ENCODE measurements at regions of chr4 and their contacts with region 1.

Region 1: GRCh38 chr4:113837397-113837796 is 75.9 kb upstream of the CAMK2D start:
- DNase-seq: peak; percentile 94
- ATAC-seq: peak; percentile 99
- H3K4me3 ChIP-seq: no peak overlapping the region
- H3K27ac ChIP-seq: peak overlapping the region; percentile 92
- H3K4me1 ChIP-seq: peaks cover 18% of the 10 kb centered on the region
- H3K27me3 ChIP-seq: no peaks in the 10 kb centered on the region
- CTCF ChIP-seq: no peak
- EP300 ChIP-seq: peak; percentile 59 to 98; a peak in 3 of 4 replicates
- POLR2A ChIP-seq: no peak
- RAD21 ChIP-seq: no peak

Region 2: GRCh38 chr4:113513382-113513781 is 324.0 kb before region 1 on chr4:
- CTCF ChIA-PET with region 1: no interaction called
- POLR2A ChIA-PET with region 1: no interaction called
- RAD21 ChIA-PET with region 1: no interaction called
- SMC1A ChIA-PET with region 1: no interaction called
- in situ Hi-C with region 1: no loop called
- intact Hi-C with region 1: no loop called
- DNase-seq: no peak
- ATAC-seq: no peak
- H3K4me3 ChIP-seq: no peak overlapping the region
- H3K27ac ChIP-seq: no peak overlapping the region
- H3K4me1 ChIP-seq: no peaks in the 10 kb centered on the region
- H3K27me3 ChIP-seq: no peaks in the 10 kb centered on the region
- CTCF ChIP-seq: no peak
- EP300 ChIP-seq: no peak
- POLR2A ChIP-seq: no peak
- RAD21 ChIP-seq: no peak

Region 3: DNA sequence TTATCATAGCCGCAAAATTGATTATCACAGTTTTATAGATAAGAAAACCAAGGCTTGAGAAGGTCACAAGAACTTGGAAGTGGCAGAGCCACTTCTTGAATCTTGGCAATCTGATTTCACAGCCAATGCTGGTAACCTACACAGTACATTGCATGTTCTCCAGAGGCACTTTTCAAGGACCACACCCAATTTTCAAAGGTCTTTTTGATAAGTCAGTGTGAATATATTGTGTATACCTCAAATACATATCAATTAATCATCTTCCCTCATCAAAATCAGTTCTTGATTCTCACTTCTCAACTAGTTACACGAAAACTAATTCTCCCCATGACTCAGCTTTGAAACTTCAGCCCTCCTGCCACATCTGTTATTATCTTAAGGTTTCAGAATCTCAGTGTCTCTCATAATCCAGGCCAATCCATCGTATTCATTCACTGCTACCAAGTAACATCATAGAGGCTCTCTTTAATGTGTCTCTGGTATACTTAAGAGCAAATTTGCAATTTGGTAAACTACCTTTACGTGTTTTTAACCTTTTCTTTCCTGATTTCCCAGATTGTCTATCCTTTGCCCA is 92.6 kb before region 1 on chr4:
- CTCF ChIA-PET with region 1: no interaction called
- POLR2A ChIA-PET with region 1: no interaction called
- RAD21 ChIA-PET with region 1: no interaction called
- SMC1A ChIA-PET with region 1: no interaction called
- in situ Hi-C with region 1: no loop called
- intact Hi-C with region 1: no loop called
- DNase-seq: no peak
- ATAC-seq: peak; percentile 28; the same call in 2 of the 3 replicates
- H3K4me3 ChIP-seq: no peak overlapping the region
- H3K27ac ChIP-seq: no peak overlapping the region
- H3K4me1 ChIP-seq: no peaks in the 10 kb centered on the region
- H3K27me3 ChIP-seq: no peaks in the 10 kb centered on the region
- CTCF ChIP-seq: no peak
- EP300 ChIP-seq: no peak
- POLR2A ChIP-seq: no peak
- RAD21 ChIP-seq: no peak

Region 4: GRCh38 chr4:113766882-113767281 is 70.5 kb before region 1 on chr4:
- CTCF ChIA-PET with region 1: interaction called, 5 read pairs
- POLR2A ChIA-PET with region 1: interaction called, 3 read pairs
- RAD21 ChIA-PET with region 1: interaction called, 5 read pairs
- SMC1A ChIA-PET with region 1: interaction called, 14 read pairs
- in situ Hi-C with region 1: no loop called
- intact Hi-C with region 1: loop called (anchors 1 kb)
- DNase-seq: no peak
- ATAC-seq: no peak
- H3K4me3 ChIP-seq: no peak overlapping the region
- H3K27ac ChIP-seq: no peak overlapping the region
- H3K4me1 ChIP-seq: no peaks in the 10 kb centered on the region
- H3K27me3 ChIP-seq: no peaks in the 10 kb centered on the region
- CTCF ChIP-seq: no peak
- EP300 ChIP-seq: no peak
- POLR2A ChIP-seq: no peak
- RAD21 ChIP-seq: no peak

Region 5: GRCh38 chr4:113823291-113823659 is 14.1 kb before region 1 on chr4:
- CTCF ChIA-PET with region 1: interaction called, 54 read pairs
- POLR2A ChIA-PET with region 1: interaction called, 36 read pairs
- RAD21 ChIA-PET with region 1: interaction called, 84 read pairs
- SMC1A ChIA-PET with region 1: interaction called, 150 read pairs
- in situ Hi-C with region 1: no loop called
- intact Hi-C with region 1: loop called (anchors 1 kb)
- DNase-seq: peak; percentile 85
- ATAC-seq: peak; percentile 84
- H3K4me3 ChIP-seq: peak overlapping the region; percentile 13; the same call in 1 of the 2 replicates
- H3K27ac ChIP-seq: peak overlapping the region; percentile 95
- H3K4me1 ChIP-seq: peaks cover 43% of the 10 kb centered on the region
- H3K27me3 ChIP-seq: no peaks in the 10 kb centered on the region
- CTCF ChIP-seq: no peak
- EP300 ChIP-seq: peak; percentile 54 to 88
- POLR2A ChIP-seq: no peak
- RAD21 ChIP-seq: no peak

Region 6: GRCh38 chr4:113893546-113893945 is 56.1 kb after region 1 on chr4:
- CTCF ChIA-PET with region 1: no interaction called
- POLR2A ChIA-PET with region 1: no interaction called
- RAD21 ChIA-PET with region 1: interaction called, 7 read pairs
- SMC1A ChIA-PET with region 1: interaction called, 10 read pairs
- in situ Hi-C with region 1: no loop called
- intact Hi-C with region 1: no loop called
- DNase-seq: no peak
- ATAC-seq: no peak
- H3K4me3 ChIP-seq: no peak overlapping the region
- H3K27ac ChIP-seq: no peak overlapping the region
- H3K4me1 ChIP-seq: no peaks in the 10 kb centered on the region; the same call in 1 of the 2 replicates
- H3K27me3 ChIP-seq: no peaks in the 10 kb centered on the region
- CTCF ChIP-seq: 0 out of 6 replicates have a peak, but pooled peaks of 1 of the 3 experiments have one; percentile 6
- EP300 ChIP-seq: no peak
- POLR2A ChIP-seq: no peak
- RAD21 ChIP-seq: peak; percentile 40; the same call in 1 of the 2 replicates

Region 7: DNA sequence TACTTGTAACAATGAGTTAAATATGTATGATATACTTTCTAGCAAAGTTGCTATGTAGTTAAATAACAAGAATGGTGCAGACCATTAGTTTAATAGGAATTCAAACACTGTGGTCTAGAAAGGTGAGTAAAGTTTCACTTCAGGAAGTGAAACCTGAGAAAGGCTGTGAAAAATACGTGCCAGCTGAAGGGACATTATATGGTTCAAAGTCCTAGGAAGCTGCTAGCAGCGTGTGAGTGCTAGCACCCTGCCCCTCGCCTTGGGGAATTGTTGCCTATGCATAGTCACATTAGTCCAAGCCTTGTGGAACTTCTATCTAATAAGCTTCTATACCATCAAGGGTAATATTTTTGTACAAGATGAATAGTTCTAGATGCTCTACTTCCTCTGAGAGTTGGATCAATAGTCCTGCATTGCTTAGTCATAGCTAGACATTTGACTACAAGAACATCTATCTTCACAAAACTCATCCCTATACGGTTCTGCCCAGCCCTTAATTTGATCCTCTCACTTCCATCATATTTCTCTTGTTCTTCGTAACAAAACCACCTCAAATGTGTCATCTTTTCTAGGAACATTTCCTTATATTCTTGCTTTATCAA is 187.9 kb after region 1 on chr4:
- CTCF ChIA-PET with region 1: interaction called, 3 read pairs
- POLR2A ChIA-PET with region 1: no interaction called
- RAD21 ChIA-PET with region 1: interaction called, 14 read pairs
- SMC1A ChIA-PET with region 1: interaction called, 5 read pairs
- in situ Hi-C with region 1: no loop called
- intact Hi-C with region 1: no loop called
- DNase-seq: peak; percentile 33
- ATAC-seq: peak; percentile 92
- H3K4me3 ChIP-seq: no peak overlapping the region
- H3K27ac ChIP-seq: no peak overlapping the region
- H3K4me1 ChIP-seq: peaks cover 4% of the 10 kb centered on the region
- H3K27me3 ChIP-seq: no peaks in the 10 kb centered on the region
- CTCF ChIP-seq: no peak
- EP300 ChIP-seq: peak in 1 of 2 experiments; percentile 70; a peak in 1 of 4 replicates
- POLR2A ChIP-seq: no peak
- RAD21 ChIP-seq: no peak